HCT116 (cell line): ENCODE measurements at regions of chr10 and their contacts with region 1.

Region 1: DNA sequence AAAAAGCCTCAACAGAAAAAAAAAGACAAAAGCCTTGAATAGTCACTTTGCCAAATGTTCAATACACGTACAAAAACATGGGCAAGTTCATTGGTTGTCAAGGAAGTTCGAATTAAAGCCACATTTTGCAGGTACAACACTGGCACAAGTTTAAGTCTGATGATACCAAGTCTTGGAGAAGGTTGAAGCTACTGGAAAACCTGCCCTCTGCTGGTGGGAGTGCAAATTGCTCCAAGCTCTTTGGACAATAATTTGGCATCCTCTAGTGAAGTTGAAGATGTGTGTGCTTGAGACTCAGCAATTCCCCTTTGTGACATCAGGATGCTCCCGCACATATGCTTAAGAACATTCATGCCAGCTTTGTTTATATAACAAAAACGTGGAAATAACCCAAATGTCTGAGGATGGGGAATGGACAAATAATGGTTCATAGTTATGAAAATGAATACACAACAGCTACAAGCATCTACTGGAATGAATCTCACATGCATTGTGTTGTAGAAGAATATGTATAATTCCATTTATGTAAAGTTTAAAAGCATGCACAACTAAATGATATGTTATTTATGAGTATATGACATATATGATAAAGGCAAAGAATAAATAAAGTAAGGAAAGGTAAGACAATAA is 120.0 kb upstream of the PLPP4 start:
- DNase-seq: peak; percentile 51
- ATAC-seq: peak; percentile 80
- H3K4me3 ChIP-seq: no peak overlapping the region
- H3K27ac ChIP-seq: no peak overlapping the region
- H3K4me1 ChIP-seq: no peaks in the 10 kb centered on the region
- H3K27me3 ChIP-seq: peaks cover 32% of the 10 kb centered on the region
- CTCF ChIP-seq: peak; percentile 75 to 96 (median 95)
- POLR2A ChIP-seq: no peak
- RAD21 ChIP-seq: peak; percentile 70

Region 2: DNA sequence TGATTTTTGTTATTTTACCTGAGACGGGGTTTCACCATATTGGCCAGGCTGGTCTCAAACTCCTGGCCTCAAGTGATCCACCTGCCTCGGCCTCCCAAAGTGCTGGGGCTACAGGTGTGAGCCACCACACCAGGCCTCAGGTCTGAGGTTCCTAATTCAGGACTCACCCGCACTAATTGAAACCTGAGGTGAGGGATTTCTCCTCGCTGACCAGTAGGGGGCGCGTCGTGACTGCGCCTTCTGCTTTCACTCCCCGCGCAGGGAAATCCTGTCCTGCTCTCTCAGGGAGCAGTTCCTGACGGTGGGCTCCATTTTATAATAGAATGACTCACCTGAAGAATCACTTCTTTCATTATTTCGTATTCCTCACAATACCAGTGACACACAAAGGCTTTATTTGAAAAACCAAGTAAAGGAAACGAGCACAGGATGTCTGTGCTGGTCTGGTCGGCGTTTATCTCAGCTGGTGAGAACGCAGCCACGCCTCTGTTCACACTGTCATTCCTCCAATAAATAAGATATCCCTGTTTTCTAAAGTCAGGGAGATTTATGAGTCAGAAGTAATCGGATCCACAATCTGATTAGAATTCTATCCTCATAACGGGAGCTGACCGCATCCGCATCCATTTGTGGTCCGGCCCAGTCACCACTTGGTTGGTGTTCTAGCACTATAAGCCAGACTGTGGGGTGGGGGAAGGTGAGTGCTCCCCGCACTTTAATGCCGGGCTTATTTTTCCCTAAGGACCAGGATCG is 650.4 kb before region 1 on chr10:
- CTCF ChIA-PET with region 1: interaction called, 5 read pairs
- POLR2A ChIA-PET with region 1: no interaction called
- RAD21 ChIA-PET with region 1: interaction called in 1 of 2 experiments, 3 read pairs
- intact Hi-C with region 1: loop called (anchors 1 kb)
- DNase-seq: peak; percentile 75
- ATAC-seq: peak; percentile 88
- H3K4me3 ChIP-seq: no peak overlapping the region
- H3K27ac ChIP-seq: no peak overlapping the region
- H3K4me1 ChIP-seq: peaks cover 11 to 24% of the 10 kb centered on the region in 2 experiments
- H3K27me3 ChIP-seq: no peaks in the 10 kb centered on the region
- CTCF ChIP-seq: peak; percentile 90 to 99 (median 90)
- POLR2A ChIP-seq: no peak
- RAD21 ChIP-seq: peak; percentile 99

Region 3: DNA sequence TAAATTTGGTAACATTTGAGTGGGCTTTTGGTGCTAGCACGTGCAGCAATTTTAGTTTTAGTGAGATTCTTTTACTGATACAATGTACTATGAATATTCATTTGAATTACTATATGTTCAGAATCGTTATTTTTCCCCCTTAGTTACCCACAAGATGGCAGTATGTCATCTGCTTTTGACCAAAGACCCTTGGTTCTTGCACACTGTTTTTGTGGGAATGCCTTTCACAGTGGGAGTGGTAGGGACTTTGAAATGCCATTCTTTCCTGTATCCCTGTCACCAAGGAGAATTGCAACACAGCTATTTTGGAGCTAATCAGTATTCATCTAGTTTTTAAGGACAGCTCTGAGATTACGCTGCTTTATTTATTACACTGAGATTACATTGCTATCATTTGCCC is 403.8 kb before region 1 on chr10:
- CTCF ChIA-PET with region 1: no interaction called
- POLR2A ChIA-PET with region 1: no interaction called
- RAD21 ChIA-PET with region 1: no interaction called
- intact Hi-C with region 1: loop called (anchors 2 kb)
- DNase-seq: no peak
- ATAC-seq: peak; percentile 58
- H3K4me3 ChIP-seq: no peak overlapping the region
- H3K27ac ChIP-seq: no peak overlapping the region
- H3K4me1 ChIP-seq: no peaks in the 10 kb centered on the region
- H3K27me3 ChIP-seq: no peaks in the 10 kb centered on the region
- CTCF ChIP-seq: peak; percentile 30 to 60 (median 38); a peak in 4 of 6 replicates
- POLR2A ChIP-seq: no peak
- RAD21 ChIP-seq: peak; percentile 61

Region 4: DNA sequence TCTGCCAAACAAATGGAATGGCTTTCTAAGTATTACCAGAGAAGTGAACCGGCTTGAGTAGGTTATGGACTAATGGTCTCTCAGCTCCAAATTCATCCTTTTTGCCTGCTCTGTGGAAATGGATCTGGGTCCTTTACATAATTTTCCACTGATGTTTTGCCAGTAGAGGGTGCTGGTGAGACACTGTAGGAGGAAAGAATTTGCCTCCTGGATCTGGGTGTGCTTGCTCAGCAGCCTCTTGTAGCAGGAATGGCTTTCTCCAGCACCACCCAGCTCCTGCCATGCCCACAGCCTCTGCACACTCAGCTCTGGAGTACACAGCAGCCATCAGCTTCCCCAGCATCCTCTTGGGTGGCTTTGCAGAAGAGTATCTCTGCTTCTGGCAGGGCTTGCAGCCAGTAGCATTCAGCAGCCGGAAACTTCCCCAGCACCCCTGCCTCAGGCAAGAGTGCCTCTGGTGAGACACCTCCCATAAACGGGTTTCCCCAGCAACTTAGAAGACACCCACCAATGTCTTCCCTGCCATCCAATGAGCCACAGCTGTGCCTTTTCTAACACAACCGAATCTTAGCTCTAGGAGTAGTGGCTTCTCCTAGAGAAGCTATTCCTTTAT is 115.0 kb before region 1 on chr10:
- CTCF ChIA-PET with region 1: interaction called, 27 read pairs
- POLR2A ChIA-PET with region 1: no interaction called
- RAD21 ChIA-PET with region 1: interaction called in 1 of 2 experiments, 3 read pairs
- intact Hi-C with region 1: loop called (anchors 1 kb)
- DNase-seq: peak; percentile 54
- ATAC-seq: peak; percentile 93
- H3K4me3 ChIP-seq: no peak overlapping the region
- H3K27ac ChIP-seq: no peak overlapping the region
- H3K4me1 ChIP-seq: no peaks in the 10 kb centered on the region
- H3K27me3 ChIP-seq: no peaks in the 10 kb centered on the region
- CTCF ChIP-seq: peak; percentile 73 to 90 (median 83)
- POLR2A ChIP-seq: no peak
- RAD21 ChIP-seq: peak; percentile 85